ENCODE measurements at regions of chr2 and their contacts with region 1.

Region 1: DNA sequence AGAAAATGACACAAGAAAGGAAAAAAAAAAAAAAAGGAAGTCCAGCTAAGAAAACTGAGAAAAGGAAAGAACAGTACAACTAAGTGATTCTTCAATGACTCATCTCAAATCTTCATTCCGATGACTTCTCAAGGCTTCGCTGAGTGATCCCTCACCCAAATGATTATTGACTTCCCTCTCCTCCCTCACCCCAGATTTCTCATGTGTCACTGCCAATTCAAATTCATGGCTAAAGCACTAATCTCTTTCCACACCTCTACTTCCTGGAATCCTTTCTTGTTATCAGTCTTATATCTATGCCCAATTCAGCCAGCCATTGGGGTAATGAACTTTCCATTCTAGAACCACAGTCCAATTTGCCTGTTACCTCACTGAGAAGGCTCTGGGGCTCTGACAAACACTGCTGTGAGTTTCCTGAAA is 7.2 kb upstream of the ABCB11 start:
- DNase-seq: no peak
- H3K4me3 Mint-ChIP-seq: no peak overlapping the region
- H3K27ac Mint-ChIP-seq: no peak overlapping the region
- H3K4me1 Mint-ChIP-seq: peaks cover 9% of the 10 kb centered on the region
- H3K27me3 Mint-ChIP-seq: no peaks in the 10 kb centered on the region

Region 2: DNA sequence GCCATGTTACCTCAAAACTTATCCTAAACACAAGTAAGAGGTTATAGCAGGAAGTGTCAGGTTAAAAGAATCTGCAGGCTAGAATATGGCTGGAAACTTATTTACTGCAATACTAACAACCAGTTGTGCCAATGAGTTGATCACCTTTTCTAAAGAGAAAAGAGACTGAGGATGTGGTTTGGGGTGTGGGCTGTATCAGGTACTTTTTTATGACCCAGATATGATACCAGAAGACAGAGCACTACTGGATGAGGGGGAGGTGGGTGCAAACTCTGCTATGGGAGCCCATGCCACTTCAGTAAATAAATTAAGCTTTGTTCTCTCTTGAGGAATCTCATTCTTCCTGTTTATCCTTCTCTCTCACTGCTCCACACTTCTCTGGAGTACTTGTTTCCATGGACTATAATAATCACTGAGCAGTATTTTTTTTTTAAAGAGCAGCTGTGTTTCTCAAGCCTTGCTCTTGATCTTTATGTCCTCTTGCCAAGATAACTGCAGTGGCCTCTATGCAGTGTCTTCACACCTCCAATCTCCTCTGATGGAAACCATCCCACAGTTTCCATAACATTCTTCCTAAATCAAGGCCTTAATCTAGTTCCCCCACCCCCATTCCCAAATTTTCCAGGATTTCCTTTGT is 287.1 kb before region 1 on chr2:
- CTCF ChIA-PET with region 1: no interaction called
- POLR2A ChIA-PET with region 1: no interaction called
- intact Hi-C with region 1: no loop called
- DNase-seq: peak; percentile 49
- H3K4me3 Mint-ChIP-seq: no peak overlapping the region
- H3K27ac Mint-ChIP-seq: peak overlapping the region; percentile 3
- H3K4me1 Mint-ChIP-seq: peaks cover 62% of the 10 kb centered on the region
- H3K27me3 Mint-ChIP-seq: no peaks in the 10 kb centered on the region

Region 3: GRCh38 chr2:169069341-169069740 is 31.0 kb after region 1 on chr2 and contains the start of gene DHRS9:
- CTCF ChIA-PET with region 1: no interaction called
- POLR2A ChIA-PET with region 1: no interaction called
- intact Hi-C with region 1: loop called (anchors 2 kb)
- DNase-seq: peak; percentile 68
- H3K4me3 Mint-ChIP-seq: peak within 1 kb of the TSS; percentile 42
- H3K27ac Mint-ChIP-seq: no peak within 1 kb of the TSS
- H3K4me1 Mint-ChIP-seq: peaks cover 36% of the 10 kb centered on the region
- H3K27me3 Mint-ChIP-seq: peaks cover 2% of the 10 kb centered on the region
- total RNA-seq, gene DHRS9: 4.9 to 5.4 TPM

Region 4: DNA sequence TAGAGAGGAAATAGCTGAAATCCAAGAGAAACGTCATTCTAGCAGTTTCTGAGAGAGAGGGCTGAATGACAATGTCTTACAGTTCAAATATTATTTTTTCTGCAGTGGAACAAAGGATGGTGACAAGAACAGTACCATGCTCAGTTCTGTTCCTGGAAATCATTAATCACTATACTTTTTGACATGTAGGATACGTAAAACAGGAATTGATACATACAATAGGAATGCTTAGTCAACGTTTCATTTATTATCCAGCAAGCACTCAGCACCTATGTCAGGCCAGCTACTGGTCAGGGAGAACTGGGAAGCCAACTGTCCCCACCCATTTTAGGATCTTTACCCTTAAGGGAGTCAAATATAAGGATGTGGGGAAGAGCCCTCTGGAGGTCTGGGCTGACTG is 145.7 kb after region 1 on chr2:
- CTCF ChIA-PET with region 1: no interaction called
- POLR2A ChIA-PET with region 1: no interaction called
- intact Hi-C with region 1: no loop called
- DNase-seq: no peak
- H3K4me3 Mint-ChIP-seq: no peak overlapping the region
- H3K27ac Mint-ChIP-seq: no peak overlapping the region
- H3K4me1 Mint-ChIP-seq: no peaks in the 10 kb centered on the region
- H3K27me3 Mint-ChIP-seq: peaks cover 12% of the 10 kb centered on the region

Measured in activated CD4-positive, alpha-beta memory T cell treated with anti-CD3 and anti-CD28 coated beads for 36 hours (primary cell).